ENCODE measurements at regions of chr6 and their contacts with region 1.

Region 1: GRCh38 chr6:52995913-52996645 is 995 bp upstream of the GSTA4 start:
- DNase-seq: peak; percentile 67
- H3K4me3 ChIP-seq: peak overlapping the region in 3 of 4 donors; percentile 20 to 65 (median 23)
- H3K27ac ChIP-seq: peak overlapping the region; percentile 89 to 96 (median 92)
- H3K4me1 ChIP-seq: peaks cover 0 to 26% (median 16%) of the 10 kb centered on the region in 4 donors
- H3K27me3 ChIP-seq: no peaks in the 10 kb centered on the region
- CTCF ChIP-seq: no peak
- EP300 ChIP-seq: no peak
- POLR2A ChIP-seq: no peak

Region 2: GRCh38 chr6:52881996-52882841 is 113.9 kb before region 1 on chr6:
- intact Hi-C with region 1: loop called (anchors 5 kb)
- DNase-seq: peak; percentile 76
- H3K4me3 ChIP-seq: peak overlapping the region; percentile 29 to 57 (median 44)
- H3K27ac ChIP-seq: peak overlapping the region in 3 of 4 donors; percentile 14 to 64 (median 39)
- H3K4me1 ChIP-seq: peaks cover 0 to 8% (median 6%) of the 10 kb centered on the region in 4 donors
- H3K27me3 ChIP-seq: no peaks in the 10 kb centered on the region
- CTCF ChIP-seq: peak; percentile 41 to 74 (median 70)
- EP300 ChIP-seq: no peak
- POLR2A ChIP-seq: no peak

Region 3: DNA sequence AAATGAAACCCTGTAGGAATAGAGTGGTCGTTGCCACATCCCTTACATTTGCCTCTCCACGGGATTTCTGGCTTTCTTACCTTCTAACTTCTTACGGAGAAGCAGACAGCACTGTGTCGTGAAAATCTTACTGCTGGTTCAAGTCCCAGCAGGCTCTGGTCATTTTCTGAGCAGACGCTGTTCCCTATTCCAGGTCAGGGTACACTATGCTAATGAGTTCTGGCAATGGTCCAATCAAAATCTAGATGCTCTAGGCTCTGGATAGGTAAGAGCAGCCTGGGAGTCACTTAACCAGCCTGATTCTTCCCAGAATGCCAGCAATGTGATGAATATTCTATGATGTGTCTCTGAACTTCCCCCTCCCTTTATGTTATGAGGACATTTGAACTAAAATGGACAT is 152.6 kb after region 1 on chr6 and contains the start of gene GCM1:
- intact Hi-C with region 1: loop called (anchors 10 kb)
- DNase-seq: no peak
- H3K4me3 ChIP-seq: no peak within 1 kb of the TSS
- H3K27ac ChIP-seq: no peak within 1 kb of the TSS
- H3K4me1 ChIP-seq: peaks cover 0 to 21% (median 18%) of the 10 kb centered on the region in 4 donors
- H3K27me3 ChIP-seq: no peaks in the 10 kb centered on the region
- CTCF ChIP-seq: no peak
- EP300 ChIP-seq: no peak
- POLR2A ChIP-seq: no peak
- total RNA-seq, gene GCM1: not detected

Region 4: DNA sequence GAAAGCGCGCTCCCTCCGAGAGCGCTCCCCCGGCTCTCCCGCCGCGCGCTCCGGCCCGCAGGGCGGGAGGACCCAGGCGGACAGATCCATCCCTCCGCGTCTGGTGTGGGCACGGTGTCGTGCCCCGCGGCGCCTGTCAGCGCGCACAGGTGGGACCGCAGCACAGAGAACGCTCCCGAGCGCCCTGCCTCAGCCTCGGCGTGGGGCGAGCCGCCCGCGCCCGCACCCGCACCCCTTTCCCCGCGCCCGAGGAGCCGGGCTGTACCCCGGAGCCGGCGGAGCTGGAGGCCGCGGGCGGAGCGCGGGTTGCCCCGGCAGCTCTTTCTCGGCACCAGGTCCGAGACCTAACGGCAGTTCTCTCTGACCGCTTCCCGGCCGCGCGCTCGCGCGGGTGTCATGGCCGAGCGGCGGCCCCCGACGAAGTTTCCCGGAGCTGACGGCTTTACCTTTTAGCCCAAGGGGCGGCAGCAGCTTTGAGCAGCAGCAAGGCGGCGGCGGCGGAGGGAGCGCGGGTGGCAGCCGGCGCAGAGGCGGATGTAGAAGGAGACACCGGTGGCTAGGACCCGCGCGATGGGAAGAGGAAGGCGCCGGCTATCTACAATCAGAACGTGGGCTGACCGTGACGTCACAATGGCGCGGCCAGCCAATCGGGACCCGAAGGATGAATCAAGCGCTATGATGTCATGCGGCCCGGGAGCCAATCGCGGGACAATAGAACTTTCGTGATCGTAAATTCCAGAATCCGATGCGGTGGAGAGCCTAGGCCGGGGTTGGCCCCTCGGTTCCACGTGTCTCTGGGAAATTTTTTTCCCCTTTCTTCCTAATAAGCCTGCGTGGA is 352.5 kb after region 1 on chr6 and contains the start of gene ELOVL5:
- intact Hi-C with region 1: loop called (anchors 5 kb)
- DNase-seq: peak; percentile 99
- H3K4me3 ChIP-seq: peak within 1 kb of the TSS; percentile 67 to 99 (median 90)
- H3K27ac ChIP-seq: peak within 1 kb of the TSS; percentile 91 to 100 (median 100)
- H3K4me1 ChIP-seq: peaks cover 0 to 30% (median 21%) of the 10 kb centered on the region in 4 donors
- H3K27me3 ChIP-seq: no peaks in the 10 kb centered on the region
- CTCF ChIP-seq: no peak
- EP300 ChIP-seq: peak in 1 of 4 donors; percentile 59
- POLR2A ChIP-seq: peak; percentile 77 to 91
- total RNA-seq, gene ELOVL5: 54.3 to 73.8 (median 70.4) TPM

Measured in sigmoid colon (tissue), 7 donors.